ENCODE measurements at regions of chr13 and their contacts with region 1.

Region 1: GRCh38 chr13:41456768-41457588 is at the start of gene RGCC:
- DNase-seq: peak; percentile 86 to 94
- H3K4me3 ChIP-seq: peak within 1 kb of the TSS; percentile 60
- H3K4me3 Mint-ChIP-seq: peak within 1 kb of the TSS; percentile 83
- H3K27ac Mint-ChIP-seq: peak within 1 kb of the TSS; percentile 19
- H3K4me1 ChIP-seq: no peaks in the 10 kb centered on the region
- H3K4me1 Mint-ChIP-seq: peaks cover 21% of the 10 kb centered on the region
- H3K27me3 ChIP-seq: no peaks in the 10 kb centered on the region
- H3K27me3 Mint-ChIP-seq: peaks cover 7% of the 10 kb centered on the region
- CTCF ChIP-seq: no peak
- total RNA-seq, gene RGCC: 65.6 and 70.8 TPM in 2 replicates

Region 2: DNA sequence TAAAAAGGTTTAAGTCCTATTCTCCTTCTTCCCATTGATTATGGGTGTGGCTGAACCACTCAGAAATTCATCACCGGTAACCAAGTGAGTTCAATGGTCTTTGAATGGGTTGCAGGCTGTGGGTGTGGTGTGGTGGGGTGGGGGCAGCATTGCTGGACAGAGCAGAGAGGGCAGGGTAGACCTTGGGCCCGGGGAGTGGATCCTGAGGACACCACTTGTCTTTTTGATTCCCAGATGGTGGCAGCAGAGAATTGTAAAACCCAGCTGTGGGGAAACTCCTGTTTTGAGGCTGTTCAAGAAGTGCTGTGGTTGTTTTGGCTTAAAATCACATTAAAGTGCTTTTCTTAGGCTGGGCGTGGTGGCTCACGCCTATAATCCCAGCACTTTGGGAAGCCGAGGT is 45.5 kb before region 1 on chr13:
- CTCF ChIA-PET with region 1: no interaction called
- POLR2A ChIA-PET with region 1: interaction called, 3 read pairs
- intact Hi-C with region 1: loop called (anchors 2 kb)
- DNase-seq: peak; percentile 72 to 74
- H3K4me3 ChIP-seq: no peak overlapping the region
- H3K4me3 Mint-ChIP-seq: no peak overlapping the region
- H3K27ac Mint-ChIP-seq: no peak overlapping the region
- H3K4me1 ChIP-seq: 0 out of 2 replicates have a peak, but pooled peaks cover 4% of the 10 kb centered on the region
- H3K4me1 Mint-ChIP-seq: no peaks in the 10 kb centered on the region
- H3K27me3 ChIP-seq: no peaks in the 10 kb centered on the region
- H3K27me3 Mint-ChIP-seq: no peaks in the 10 kb centered on the region
- CTCF ChIP-seq: peak; percentile 48 to 52

Region 3: DNA sequence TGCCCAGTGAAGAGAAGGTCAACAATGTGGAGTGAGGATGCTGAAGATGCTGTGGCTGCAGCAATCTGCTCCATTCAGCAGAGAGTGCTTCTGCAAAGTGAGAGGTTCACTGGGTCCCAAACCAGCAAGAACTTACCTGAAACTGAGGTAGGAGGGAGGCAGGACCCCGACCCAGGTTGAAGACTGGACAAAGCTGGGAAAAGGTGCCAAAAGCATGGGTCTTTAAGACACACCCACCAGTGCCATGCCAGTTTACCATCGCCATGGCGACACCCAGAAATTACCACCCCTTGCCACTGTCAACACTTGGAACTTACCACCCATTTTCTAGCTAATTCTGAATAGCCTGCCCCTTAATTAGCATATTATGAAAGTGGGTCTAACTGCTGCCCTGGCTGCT is 71.0 kb after region 1 on chr13:
- CTCF ChIA-PET with region 1: no interaction called
- POLR2A ChIA-PET with region 1: no interaction called
- intact Hi-C with region 1: no loop called
- DNase-seq: no peak
- H3K4me3 ChIP-seq: no peak overlapping the region
- H3K4me3 Mint-ChIP-seq: no peak overlapping the region
- H3K27ac Mint-ChIP-seq: no peak overlapping the region
- H3K4me1 ChIP-seq: no peaks in the 10 kb centered on the region
- H3K4me1 Mint-ChIP-seq: no peaks in the 10 kb centered on the region
- H3K27me3 ChIP-seq: no peaks in the 10 kb centered on the region; the same call in 1 of the 2 replicates
- H3K27me3 Mint-ChIP-seq: no peaks in the 10 kb centered on the region
- CTCF ChIP-seq: no peak

Region 4: DNA sequence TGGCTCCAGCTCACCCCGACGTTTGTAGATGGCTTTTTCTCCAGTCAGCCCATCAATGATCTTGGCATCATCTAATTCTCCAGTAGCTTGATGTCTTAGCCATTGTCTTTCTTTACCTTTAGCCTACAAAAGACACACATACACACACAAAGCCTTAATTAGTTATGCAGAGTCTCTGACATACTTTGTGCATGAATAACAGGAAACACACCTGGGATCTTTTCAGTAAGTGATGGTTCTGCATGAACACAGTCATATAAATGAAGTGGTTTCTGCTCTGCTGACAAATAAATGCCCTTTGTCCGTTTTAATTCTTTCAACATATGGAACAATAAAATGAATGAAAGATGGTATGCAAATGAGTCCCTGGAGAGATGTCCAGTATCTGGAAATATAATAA is 133.7 kb after region 1 on chr13:
- CTCF ChIA-PET with region 1: no interaction called
- POLR2A ChIA-PET with region 1: no interaction called
- intact Hi-C with region 1: loop called (anchors 5 kb)
- DNase-seq: no peak
- H3K4me3 ChIP-seq: no peak overlapping the region
- H3K4me3 Mint-ChIP-seq: no peak overlapping the region
- H3K27ac Mint-ChIP-seq: no peak overlapping the region
- H3K4me1 ChIP-seq: peaks cover 14% of the 10 kb centered on the region
- H3K4me1 Mint-ChIP-seq: no peaks in the 10 kb centered on the region
- H3K27me3 ChIP-seq: no peaks in the 10 kb centered on the region
- H3K27me3 Mint-ChIP-seq: no peaks in the 10 kb centered on the region
- CTCF ChIP-seq: no peak

Region 5: GRCh38 chr13:41605319-41606285 is 148.6 kb after region 1 on chr13:
- CTCF ChIA-PET with region 1: interaction called, 4 read pairs
- POLR2A ChIA-PET with region 1: no interaction called
- intact Hi-C with region 1: loop called (anchors 2 kb)
- DNase-seq: peak; percentile 41 to 62
- H3K4me3 ChIP-seq: no peak overlapping the region
- H3K4me3 Mint-ChIP-seq: peak overlapping the region; percentile 56
- H3K27ac Mint-ChIP-seq: peak overlapping the region; percentile 87
- H3K4me1 ChIP-seq: peaks cover 77% of the 10 kb centered on the region
- H3K4me1 Mint-ChIP-seq: peaks cover 53% of the 10 kb centered on the region
- H3K27me3 ChIP-seq: no peaks in the 10 kb centered on the region
- H3K27me3 Mint-ChIP-seq: no peaks in the 10 kb centered on the region
- CTCF ChIP-seq: no peak

Region 6: GRCh38 chr13:41995946-41996345 is 539.0 kb after region 1 on chr13:
- CTCF ChIA-PET with region 1: no interaction called
- POLR2A ChIA-PET with region 1: interaction called, 10 read pairs
- intact Hi-C with region 1: no loop called
- DNase-seq: no peak
- H3K4me3 ChIP-seq: no peak overlapping the region
- H3K4me3 Mint-ChIP-seq: no peak overlapping the region
- H3K27ac Mint-ChIP-seq: no peak overlapping the region
- H3K4me1 ChIP-seq: peaks cover 5% of the 10 kb centered on the region
- H3K4me1 Mint-ChIP-seq: no peaks in the 10 kb centered on the region
- H3K27me3 ChIP-seq: no peaks in the 10 kb centered on the region
- H3K27me3 Mint-ChIP-seq: peaks cover 5% of the 10 kb centered on the region
- CTCF ChIP-seq: no peak